ENCODE measurements at regions of chr3 and their contacts with region 1.

Region 1: DNA sequence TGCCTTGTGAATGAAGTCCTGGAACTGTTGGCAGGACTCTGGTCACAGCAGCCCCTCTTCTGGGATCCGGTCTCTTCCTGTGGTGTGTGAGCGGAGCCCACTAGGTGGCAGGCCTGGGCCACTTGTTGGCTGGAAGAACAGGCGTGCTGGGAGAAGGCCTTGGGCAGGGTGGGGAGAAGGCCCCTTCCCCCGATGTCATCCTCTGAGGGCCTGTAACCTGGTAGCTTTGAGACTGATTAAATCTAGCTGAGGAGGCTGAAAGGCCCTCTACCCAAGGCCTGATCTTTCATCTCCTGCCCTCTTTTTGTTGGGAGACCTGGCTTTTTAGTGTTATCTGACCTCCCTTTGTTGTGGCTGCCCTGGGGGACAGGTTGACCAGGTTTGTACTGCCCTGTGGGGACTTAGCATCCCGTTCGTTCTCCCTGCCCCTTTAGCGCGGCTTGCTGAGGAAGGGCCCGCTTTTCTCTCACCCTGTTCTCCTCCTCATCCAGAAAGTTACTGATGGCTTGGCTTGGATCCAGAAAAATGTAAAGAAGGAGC is 48.3 kb downstream of the CHCHD6 start:
- DNase-seq: no peak
- H3K4me3 ChIP-seq: no peak overlapping the region
- H3K27me3 ChIP-seq: no peaks in the 10 kb centered on the region
- CTCF ChIP-seq: peak; percentile 94

Region 2: DNA sequence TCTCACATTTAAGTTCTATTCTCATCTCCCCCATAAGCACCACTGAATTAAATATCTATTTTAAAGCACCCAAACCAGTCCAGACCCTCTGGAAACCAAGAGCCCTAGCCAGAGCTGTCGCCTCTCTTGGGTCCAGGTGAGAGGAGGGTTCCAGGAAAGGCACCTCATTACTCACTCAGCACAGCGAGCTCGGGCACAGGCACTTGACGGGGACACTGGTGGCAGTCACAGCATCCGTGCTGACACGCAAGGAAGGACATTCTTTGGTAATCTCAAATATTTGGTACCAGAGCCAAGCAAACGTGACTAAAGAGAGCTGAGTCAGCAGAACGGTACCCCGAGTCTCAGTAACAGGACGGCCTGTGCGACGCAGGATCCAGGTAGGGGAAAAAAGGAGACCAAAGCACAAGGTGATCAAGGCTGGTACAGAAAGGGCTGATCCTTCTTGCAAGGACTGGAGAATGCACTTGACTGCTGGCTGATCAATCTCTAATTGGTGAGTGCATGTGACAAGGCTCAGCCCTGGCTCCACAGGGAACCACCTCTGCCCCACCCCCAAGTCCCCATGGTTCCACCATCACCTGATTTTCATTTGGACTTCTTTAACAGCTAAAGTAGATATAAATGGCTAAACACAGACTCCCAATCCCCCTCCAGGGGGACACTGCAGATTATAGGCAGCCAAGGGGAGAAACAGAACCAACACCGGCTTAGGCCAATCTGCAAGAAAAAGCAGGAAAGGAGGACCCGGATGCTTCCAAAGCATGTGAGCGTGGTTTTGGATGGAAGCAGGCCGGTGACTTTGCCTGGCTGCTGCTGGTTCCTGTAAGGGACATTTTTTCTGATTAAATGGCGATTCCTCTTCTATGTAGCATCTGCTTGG is 13.1 kb after region 1 on chr3:
- CTCF ChIA-PET with region 1: interaction called, 20 read pairs
- POLR2A ChIA-PET with region 1: no interaction called
- DNase-seq: no peak
- H3K4me3 ChIP-seq: no peak overlapping the region
- H3K27me3 ChIP-seq: no peaks in the 10 kb centered on the region
- CTCF ChIP-seq: no peak

Region 3: GRCh38 chr3:126982471-126983175 is 230.2 kb after region 1 on chr3 and contains the start of gene PLXNA1:
- CTCF ChIA-PET with region 1: interaction called, 81 read pairs
- POLR2A ChIA-PET with region 1: interaction called, 5 read pairs
- DNase-seq: no peak
- H3K4me3 ChIP-seq: peak within 1 kb of the TSS; percentile 83
- H3K27me3 ChIP-seq: no peaks in the 10 kb centered on the region
- CTCF ChIP-seq: peak; percentile 92
- polyA plus RNA-seq, gene PLXNA1: 34.7 and 57.2 TPM in 2 replicates

Region 4: GRCh38 chr3:126995926-126996512 is 243.6 kb after region 1 on chr3:
- CTCF ChIA-PET with region 1: interaction called, 16 read pairs
- POLR2A ChIA-PET with region 1: no interaction called
- DNase-seq: no peak
- H3K4me3 ChIP-seq: no peak overlapping the region
- H3K27me3 ChIP-seq: no peaks in the 10 kb centered on the region
- CTCF ChIP-seq: peak; percentile 30; the same call in 1 of the 2 replicates

Region 5: DNA sequence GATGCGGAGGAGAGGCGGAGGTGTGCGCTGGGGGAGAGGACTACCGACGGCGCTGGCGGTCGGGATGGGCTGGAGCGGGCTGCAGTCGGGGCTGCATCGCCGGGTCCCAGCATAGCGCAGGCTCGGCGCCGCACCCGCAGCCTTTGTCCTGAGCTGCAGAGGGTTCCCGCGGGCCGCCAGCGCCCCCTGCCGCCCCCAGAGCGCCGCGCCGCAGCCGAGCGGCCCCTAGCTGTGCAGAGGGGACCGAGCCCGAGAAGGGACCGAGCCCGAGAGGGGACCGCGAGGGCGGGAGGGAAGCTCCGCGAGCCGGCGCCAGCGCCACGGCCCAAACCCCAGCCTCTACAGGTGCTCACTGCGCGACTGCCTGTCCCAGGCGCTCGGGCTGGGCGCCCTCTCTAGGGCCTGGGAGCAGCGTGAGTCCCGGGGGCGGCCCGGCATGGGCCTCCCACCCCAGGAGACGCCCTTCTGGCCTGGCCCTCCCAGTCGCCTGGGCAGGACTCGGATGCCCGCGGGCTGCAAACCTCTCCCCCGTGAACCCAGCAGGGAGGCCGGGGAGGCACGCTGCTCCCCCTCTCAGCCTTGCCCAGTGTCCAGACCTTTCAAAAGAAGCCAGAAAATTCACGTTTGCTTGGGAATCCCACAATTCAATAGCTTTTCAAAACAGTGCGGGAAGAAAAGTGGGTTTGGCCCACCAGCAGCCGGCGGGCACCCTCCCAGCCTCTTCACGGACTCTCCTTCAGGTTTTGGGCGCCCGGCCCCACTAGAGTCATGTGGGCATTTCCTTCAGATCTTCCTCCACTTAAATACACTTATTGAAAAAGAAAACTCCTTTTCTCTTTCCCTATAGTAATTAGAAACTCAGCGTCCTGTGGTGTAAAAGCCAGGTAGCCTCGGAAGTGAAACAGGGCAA is 703.4 kb after region 1 on chr3:
- CTCF ChIA-PET with region 1: interaction called, 30 read pairs
- POLR2A ChIA-PET with region 1: no interaction called
- DNase-seq: no peak
- H3K4me3 ChIP-seq: peak overlapping the region; percentile 27
- H3K27me3 ChIP-seq: peaks cover 11% of the 10 kb centered on the region
- CTCF ChIP-seq: peak; percentile 51

Region 6: GRCh38 chr3:127544192-127544802 is 791.9 kb after region 1 on chr3:
- CTCF ChIA-PET with region 1: interaction called, 43 read pairs
- POLR2A ChIA-PET with region 1: no interaction called
- DNase-seq: no peak
- H3K4me3 ChIP-seq: no peak overlapping the region
- H3K27me3 ChIP-seq: peaks cover 1% of the 10 kb centered on the region; the same call in 1 of the 2 replicates
- CTCF ChIP-seq: peak; percentile 87

Measured in BJ (cell line).